Ovary (tissue), 10 donors: ENCODE measurements at regions of chr19 and their contacts with region 1.

Region 1: DNA sequence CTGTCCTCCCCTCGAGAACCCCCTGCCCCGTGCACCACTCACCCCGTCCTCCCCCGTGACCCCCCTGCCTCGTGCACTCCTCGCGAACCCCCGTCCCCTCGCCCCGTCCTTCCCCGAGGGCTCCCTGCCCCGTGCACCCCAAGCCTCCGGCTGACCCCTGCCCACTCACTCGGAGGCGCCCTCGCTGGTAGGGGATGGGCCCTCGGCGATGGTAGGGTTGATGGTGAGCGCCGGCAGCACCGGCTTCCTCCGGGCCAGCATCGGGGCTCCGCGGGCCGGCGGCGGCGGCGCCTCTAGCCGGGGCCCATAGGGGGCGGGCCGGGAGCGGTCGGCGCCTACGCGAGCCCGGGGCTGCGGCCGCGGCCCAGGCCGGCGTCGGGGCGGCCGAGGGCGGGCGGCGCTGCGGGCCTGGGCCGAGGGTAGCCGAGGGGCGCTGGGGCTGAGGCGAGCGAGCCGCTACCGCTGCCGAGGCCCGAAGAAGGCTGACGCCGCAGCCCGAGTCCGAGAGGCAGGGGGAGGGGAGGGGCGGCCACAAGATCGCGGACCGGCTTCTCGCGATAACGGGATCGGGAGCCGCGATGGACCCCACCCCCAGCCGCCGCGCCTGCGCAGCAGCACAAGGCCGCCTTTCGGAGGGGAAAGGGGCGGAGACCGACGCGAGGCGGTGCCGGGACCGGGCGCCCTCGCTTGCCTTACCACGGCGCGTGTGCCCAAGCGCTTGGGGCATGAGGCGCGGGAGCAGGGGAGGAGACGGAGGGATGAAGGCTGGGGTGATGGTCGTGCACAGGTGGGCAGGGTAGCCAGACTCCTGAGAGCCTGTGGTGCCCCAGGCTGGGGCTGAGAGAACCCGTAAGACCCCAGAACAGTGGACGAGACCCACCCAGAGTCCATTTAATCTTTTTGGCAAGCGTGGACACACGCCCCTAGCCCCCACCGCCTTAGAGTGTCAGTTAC is at the start of gene MAP2K2:
- DNase-seq: peak; percentile 95 to 98 (median 97)
- H3K4me3 ChIP-seq: peak within 1 kb of the TSS; percentile 99
- H3K27ac ChIP-seq: peak within 1 kb of the TSS; percentile 22 to 57
- H3K4me1 ChIP-seq: peaks cover 14% of the 10 kb centered on the region
- H3K27me3 ChIP-seq: no peaks in the 10 kb centered on the region
- CTCF ChIP-seq: peak in 1 of 3 donors; percentile 19
- EP300 ChIP-seq: no peak
- POLR2A ChIP-seq: peak; percentile 24
- total RNA-seq, gene MAP2K2: 39.9 to 130 (median 116) TPM

Region 2: GRCh38 chr19:4052050-4052999 is 71.6 kb before region 1 on chr19:
- intact Hi-C with region 1: no loop called
- DNase-seq: peak in 1 of 5 donors; percentile 54
- H3K4me3 ChIP-seq: no peak overlapping the region
- H3K27ac ChIP-seq: no peak overlapping the region
- H3K4me1 ChIP-seq: peaks cover 8% of the 10 kb centered on the region
- H3K27me3 ChIP-seq: no peaks in the 10 kb centered on the region
- CTCF ChIP-seq: no peak
- EP300 ChIP-seq: no peak
- POLR2A ChIP-seq: no peak

Region 3: DNA sequence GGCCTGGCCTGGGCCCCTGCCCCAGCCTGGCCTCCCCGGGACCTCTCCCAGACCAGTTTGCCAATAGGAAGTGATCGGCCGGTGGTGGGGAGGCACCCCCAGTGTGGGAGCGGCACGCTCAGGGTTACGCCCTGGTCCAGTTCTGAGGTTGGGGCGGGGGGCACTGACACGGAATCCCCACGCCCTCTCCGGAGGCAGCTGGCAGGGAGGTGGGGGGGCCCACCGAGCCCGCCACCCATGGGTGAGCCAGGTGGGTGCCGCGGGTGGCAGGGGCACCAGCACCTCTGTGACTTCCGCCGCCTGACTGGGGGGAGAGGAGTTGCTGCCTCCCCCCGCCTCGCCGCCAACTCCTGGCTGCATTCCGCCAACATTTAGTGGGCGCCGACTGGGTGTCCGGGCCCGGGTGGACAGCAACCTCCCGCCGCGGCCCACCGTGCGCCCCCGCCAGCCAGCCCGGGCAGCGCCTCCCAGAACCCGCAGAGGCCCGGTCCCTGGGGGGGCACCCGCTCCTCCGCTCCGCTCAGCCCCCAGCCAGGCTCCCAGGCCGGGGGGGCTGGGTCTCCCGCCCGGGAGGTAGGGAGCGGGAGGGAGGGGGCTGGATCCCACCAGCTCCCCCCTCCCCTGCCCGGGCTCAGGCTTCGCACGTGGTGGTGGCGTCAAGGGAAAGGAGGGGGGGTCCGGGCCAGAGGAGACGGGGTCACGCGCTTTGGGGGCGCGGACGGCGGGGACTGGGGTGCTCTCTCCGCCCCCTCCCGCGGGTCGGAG is 59.2 kb before region 1 on chr19:
- intact Hi-C with region 1: loop called in 1 of 4 experiments (anchors 5 kb)
- DNase-seq: peak; percentile 75 to 83 (median 80)
- H3K4me3 ChIP-seq: peak overlapping the region; percentile 67
- H3K27ac ChIP-seq: peak overlapping the region; percentile 92
- H3K4me1 ChIP-seq: peaks cover 38% of the 10 kb centered on the region
- H3K27me3 ChIP-seq: no peaks in the 10 kb centered on the region
- CTCF ChIP-seq: no peak
- EP300 ChIP-seq: no peak
- POLR2A ChIP-seq: peak; percentile 13